Activated CD4-positive, alpha-beta T cell treated with anti-CD3 and anti-CD28 coated beads, Interleukin-2, amount 10 ng/mL, durations not matched to agents 24 days and 14 days (primary cell): ENCODE measurements at regions of chr18 and their contacts with region 1.

Region 1: DNA sequence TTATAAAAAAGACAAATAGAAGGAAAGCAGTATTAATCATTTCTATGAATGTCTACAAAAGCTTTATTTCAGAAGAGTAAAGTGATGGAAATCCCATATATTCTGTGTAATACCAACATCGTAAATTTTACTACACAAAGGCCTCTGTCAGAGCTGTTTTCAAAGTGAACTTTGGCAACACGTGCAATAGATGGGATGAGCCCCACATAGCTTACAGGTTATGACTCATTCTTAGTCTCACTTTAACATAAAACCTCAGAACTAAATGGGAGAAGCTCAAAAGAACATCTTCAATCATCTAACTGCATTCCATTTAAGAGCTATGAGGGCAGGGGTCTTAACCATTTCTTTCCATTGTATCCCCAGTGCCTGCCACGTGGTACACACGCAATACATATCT is 11.5 kb downstream of the VPS4B start:
- DNase-seq: no peak
- H3K4me3 Mint-ChIP-seq: peak overlapping the region; percentile 9
- H3K27ac Mint-ChIP-seq: peak overlapping the region; percentile 48
- H3K4me1 Mint-ChIP-seq: peaks cover 45% of the 10 kb centered on the region
- H3K27me3 Mint-ChIP-seq: no peaks in the 10 kb centered on the region

Region 2: GRCh38 chr18:62702253-62702652 is 708.5 kb before region 1 on chr18:
- intact Hi-C with region 1: no loop called
- DNase-seq: no peak
- H3K4me3 Mint-ChIP-seq: no peak overlapping the region
- H3K27ac Mint-ChIP-seq: no peak overlapping the region
- H3K4me1 Mint-ChIP-seq: no peaks in the 10 kb centered on the region
- H3K27me3 Mint-ChIP-seq: peaks cover 22% of the 10 kb centered on the region

Region 3: DNA sequence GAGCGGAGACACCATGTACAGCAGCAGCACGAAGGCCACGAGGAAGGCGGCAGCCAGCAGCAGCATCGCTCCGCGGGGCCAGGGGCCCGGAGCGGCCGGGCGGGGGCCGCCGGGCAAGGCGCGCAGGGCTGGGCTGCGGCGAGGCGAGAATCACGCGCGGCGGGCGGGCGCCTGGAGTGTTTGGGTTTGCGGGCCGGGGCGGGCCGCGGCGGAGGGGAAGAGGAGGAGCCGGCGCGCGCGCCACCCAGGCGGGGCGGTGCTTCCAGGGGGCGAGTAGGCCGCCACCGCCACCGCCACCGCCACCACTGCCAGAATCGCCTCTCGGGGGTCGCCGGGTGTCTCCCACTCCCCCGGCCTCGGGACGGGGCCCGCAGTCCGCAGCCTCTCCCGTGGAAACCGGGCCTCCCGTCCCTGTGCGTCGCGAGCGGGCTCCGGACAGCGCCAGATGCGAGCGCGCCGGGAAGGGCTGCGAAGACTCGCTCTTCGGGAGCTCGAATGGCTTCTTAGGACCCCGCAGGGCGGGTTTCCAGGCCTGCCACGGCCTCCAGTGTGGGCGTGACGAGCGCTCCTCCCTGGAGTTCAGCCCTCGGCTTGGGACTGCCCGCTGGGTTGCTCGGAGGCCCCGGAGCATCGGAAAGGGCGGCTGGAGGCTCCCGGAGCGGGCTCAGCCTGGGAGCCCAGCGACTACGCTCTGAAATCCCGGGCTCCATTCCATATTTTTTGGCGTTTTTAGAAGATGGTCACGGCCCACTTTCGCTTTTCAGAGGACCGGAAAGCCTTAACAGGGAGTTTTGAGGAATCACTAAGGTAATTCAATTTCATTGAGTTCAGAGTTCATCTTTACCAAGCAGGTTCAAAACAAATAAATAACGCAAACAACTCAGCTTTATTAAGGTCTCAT is 43.5 kb before region 1 on chr18 and contains the start of gene KDSR:
- intact Hi-C with region 1: loop called (anchors 1 kb)
- DNase-seq: peak; percentile 96
- H3K4me3 Mint-ChIP-seq: peak within 1 kb of the TSS; percentile 91
- H3K27ac Mint-ChIP-seq: peak within 1 kb of the TSS; percentile 81
- H3K4me1 Mint-ChIP-seq: peaks cover 29% of the 10 kb centered on the region
- H3K27me3 Mint-ChIP-seq: no peaks in the 10 kb centered on the region
- total RNA-seq, gene KDSR: 83.9 and 86.9 TPM in 2 replicates